ENCODE measurements at regions of chr1 and their contacts with region 1.

Region 1: GRCh38 chr1:151327223-151327902 is at the start of gene PI4KB:
- DNase-seq: peak; percentile 86
- H3K4me3 Mint-ChIP-seq: peak within 1 kb of the TSS; percentile 91
- H3K27ac Mint-ChIP-seq: peak within 1 kb of the TSS; percentile 90
- H3K4me1 Mint-ChIP-seq: peaks cover 40% of the 10 kb centered on the region
- H3K27me3 Mint-ChIP-seq: peaks cover 1% of the 10 kb centered on the region
- total RNA-seq, gene PI4KB: 52.4 and 54.7 TPM in 2 replicates

Region 2: DNA sequence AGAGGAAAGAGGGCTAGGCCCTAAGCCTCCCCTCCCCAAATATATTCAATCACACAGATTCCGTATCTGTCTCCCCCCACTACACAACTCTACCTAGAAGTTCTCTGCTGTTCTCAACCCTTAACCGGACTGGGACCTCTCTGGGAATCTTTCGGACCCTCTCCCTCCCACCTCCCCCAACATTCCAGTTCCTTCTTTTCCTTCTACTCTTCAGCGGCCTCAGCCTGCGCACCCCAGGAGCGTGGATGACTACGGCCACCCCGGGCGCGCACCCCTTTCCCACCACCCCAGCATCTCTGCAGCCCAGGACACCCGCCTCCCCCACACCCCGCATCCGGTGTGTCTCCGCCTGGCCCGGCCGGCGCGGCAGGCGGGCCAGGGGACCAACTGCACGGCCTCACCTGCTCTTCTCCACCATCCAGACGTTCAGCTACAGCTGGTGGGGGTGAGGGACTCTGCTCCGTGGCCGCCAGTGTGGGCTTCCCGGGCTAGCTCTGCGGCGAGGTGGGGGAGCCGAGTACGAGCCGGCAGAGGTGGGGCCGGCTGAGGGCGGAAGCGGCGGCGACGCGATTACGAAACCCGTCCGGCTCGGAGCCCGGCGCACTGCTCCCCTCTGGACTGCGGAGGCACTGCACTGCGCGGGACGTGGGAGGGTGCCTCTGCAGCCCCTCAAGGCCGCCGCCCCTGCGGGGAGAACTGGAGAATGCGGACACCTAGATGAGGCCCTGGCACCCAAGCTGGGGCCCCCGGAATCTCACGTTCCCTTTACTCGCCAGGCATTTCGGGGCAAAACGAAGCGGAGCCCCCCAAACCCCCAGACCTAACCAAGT is 268.1 kb before region 1 on chr1 and contains the start of gene CDC42SE1:
- intact Hi-C with region 1: loop called (anchors 5 kb)
- DNase-seq: peak; percentile 81
- H3K4me3 Mint-ChIP-seq: peak within 1 kb of the TSS; percentile 95
- H3K27ac Mint-ChIP-seq: peak within 1 kb of the TSS; percentile 97
- H3K4me1 Mint-ChIP-seq: peaks cover 65% of the 10 kb centered on the region
- H3K27me3 Mint-ChIP-seq: no peaks in the 10 kb centered on the region
- total RNA-seq, gene CDC42SE1: 216 and 219 TPM in 2 replicates

Region 3: GRCh38 chr1:151156515-151156819 is 170.9 kb before region 1 on chr1 and contains the start of gene TNFAIP8L2:
- intact Hi-C with region 1: loop called (anchors 5 kb)
- DNase-seq: peak; percentile 72
- H3K4me3 Mint-ChIP-seq: peak within 1 kb of the TSS; percentile 92
- H3K27ac Mint-ChIP-seq: peak within 1 kb of the TSS; percentile 99
- H3K4me1 Mint-ChIP-seq: peaks cover 42% of the 10 kb centered on the region
- H3K27me3 Mint-ChIP-seq: no peaks in the 10 kb centered on the region
- total RNA-seq, gene TNFAIP8L2: 38.0 and 38.5 TPM in 2 replicates

Region 4: GRCh38 chr1:151254217-151255213 is 72.8 kb before region 1 on chr1 and contains the start of gene PSMD4:
- intact Hi-C with region 1: loop called (anchors 1 kb)
- DNase-seq: peak; percentile 91
- H3K4me3 Mint-ChIP-seq: peak within 1 kb of the TSS; percentile 98
- H3K27ac Mint-ChIP-seq: peak within 1 kb of the TSS; percentile 88
- H3K4me1 Mint-ChIP-seq: peaks cover 17% of the 10 kb centered on the region
- H3K27me3 Mint-ChIP-seq: no peaks in the 10 kb centered on the region
- total RNA-seq, gene PSMD4: 276 and 285 TPM in 2 replicates

Region 5: GRCh38 chr1:151340870-151341754 is 13.7 kb after region 1 on chr1:
- intact Hi-C with region 1: loop called (anchors 1 kb)
- DNase-seq: peak; percentile 37
- H3K4me3 Mint-ChIP-seq: no peak overlapping the region
- H3K27ac Mint-ChIP-seq: peak overlapping the region; percentile 46
- H3K4me1 Mint-ChIP-seq: peaks cover 33% of the 10 kb centered on the region
- H3K27me3 Mint-ChIP-seq: no peaks in the 10 kb centered on the region

Region 6: GRCh38 chr1:151399890-151400495 is 72.6 kb after region 1 on chr1:
- intact Hi-C with region 1: loop called (anchors 1 kb)
- DNase-seq: no peak
- H3K4me3 Mint-ChIP-seq: peak overlapping the region; percentile 92
- H3K27ac Mint-ChIP-seq: peak overlapping the region; percentile 99
- H3K4me1 Mint-ChIP-seq: peaks cover 27% of the 10 kb centered on the region
- H3K27me3 Mint-ChIP-seq: peaks cover 3% of the 10 kb centered on the region

Region 7: DNA sequence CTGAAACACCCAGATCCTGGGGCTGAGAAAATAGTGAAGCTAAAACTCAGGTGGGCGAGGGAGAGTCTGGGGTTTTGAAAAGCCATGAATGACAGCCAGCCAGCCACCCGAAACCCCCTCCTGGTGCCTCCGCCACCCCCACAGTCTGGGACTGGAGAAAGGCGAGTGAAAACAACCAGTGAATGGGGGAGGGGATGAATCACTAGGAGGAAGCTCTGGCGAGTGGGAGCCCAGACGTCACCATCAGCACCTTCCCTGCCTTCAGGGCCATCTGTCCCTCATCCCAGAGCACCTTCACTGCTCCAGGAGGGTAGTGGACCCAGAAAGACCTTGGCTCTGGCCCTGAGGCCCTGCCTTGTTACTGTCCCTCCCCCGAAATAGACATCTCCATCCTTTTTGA is 495.0 kb after region 1 on chr1:
- intact Hi-C with region 1: loop called (anchors 2 kb)
- DNase-seq: no peak
- H3K4me3 Mint-ChIP-seq: peak overlapping the region; percentile 37
- H3K27ac Mint-ChIP-seq: peak overlapping the region; percentile 83
- H3K4me1 Mint-ChIP-seq: peaks cover 67% of the 10 kb centered on the region
- H3K27me3 Mint-ChIP-seq: no peaks in the 10 kb centered on the region

Measured in activated T-helper 1 cell treated with anti-CD3 and anti-CD28 coated beads, Interleukin-12 subunit alpha, Interleukin-12 subunit beta, Interleukin-2, Interleukin-4 antibody, amounts not matched to agents 30 ng/mL and 10 ng/mL and 1 ng/mL, durations not matched to agents 14 hours and 24 hours and 36 hours (primary cell).